ENCODE measurements at regions of chr19 and their contacts with region 1.

Region 1: GRCh38 chr19:55339048-55339888 is at the start of gene KMT5C:
- DNase-seq: peak; percentile 100
- ATAC-seq: peak; percentile 93
- H3K4me3 ChIP-seq: peak within 1 kb of the TSS; percentile 85
- H3K27ac ChIP-seq: peak within 1 kb of the TSS; percentile 84
- H3K4me1 ChIP-seq: peaks cover 10% of the 10 kb centered on the region
- H3K27me3 ChIP-seq: no peaks in the 10 kb centered on the region; a peak in 1 of 4 replicates
- CTCF ChIP-seq: peak; percentile 11 to 19 (median 14); a peak in 3 of 6 replicates
- EP300 ChIP-seq: no peak
- POLR2A ChIP-seq: 0 out of 2 replicates have a peak, but pooled peaks have one; percentile 13
- RAD21 ChIP-seq: no peak
- polyA plus RNA-seq, gene KMT5C: 0.20 TPM in 1 of 2 experiments, not detected in the other

Region 2: GRCh38 chr19:55279770-55280643 is 59.3 kb before region 1 on chr19 and contains the start of gene HSPBP1:
- CTCF ChIA-PET with region 1: interaction called, 5 read pairs
- POLR2A ChIA-PET with region 1: interaction called, 18 read pairs
- RAD21 ChIA-PET with region 1: interaction called, 8 read pairs
- SMC1A ChIA-PET with region 1: interaction called, 4 read pairs
- in situ Hi-C with region 1: no loop called
- intact Hi-C with region 1: no loop called
- DNase-seq: peak; percentile 93
- ATAC-seq: peak; percentile 91
- H3K4me3 ChIP-seq: peak within 1 kb of the TSS; percentile 82
- H3K27ac ChIP-seq: peak within 1 kb of the TSS; percentile 50
- H3K4me1 ChIP-seq: peaks cover 42% of the 10 kb centered on the region
- H3K27me3 ChIP-seq: no peaks in the 10 kb centered on the region; a peak in 1 of 4 replicates
- CTCF ChIP-seq: no peak
- EP300 ChIP-seq: no peak
- POLR2A ChIP-seq: peak; percentile 84
- RAD21 ChIP-seq: no peak
- polyA plus RNA-seq, gene HSPBP1: 0.18 to 1.3 TPM

Region 3: GRCh38 chr19:55301459-55302317 is 37.6 kb before region 1 on chr19:
- CTCF ChIA-PET with region 1: interaction called, 32 read pairs
- POLR2A ChIA-PET with region 1: interaction called, 14 read pairs
- RAD21 ChIA-PET with region 1: interaction called, 17 read pairs
- SMC1A ChIA-PET with region 1: interaction called, 16 read pairs
- in situ Hi-C with region 1: no loop called
- intact Hi-C with region 1: no loop called
- DNase-seq: peak; percentile 59
- ATAC-seq: peak; percentile 93
- H3K4me3 ChIP-seq: peak overlapping the region; percentile 67; the same call in 1 of the 2 replicates
- H3K27ac ChIP-seq: peak overlapping the region; percentile 27
- H3K4me1 ChIP-seq: peaks cover 11% of the 10 kb centered on the region
- H3K27me3 ChIP-seq: no peaks in the 10 kb centered on the region
- CTCF ChIP-seq: peak; percentile 91 to 97 (median 95)
- EP300 ChIP-seq: no peak
- POLR2A ChIP-seq: peak; percentile 37; the same call in 1 of the 2 replicates
- RAD21 ChIP-seq: peak; percentile 49

Region 4: DNA sequence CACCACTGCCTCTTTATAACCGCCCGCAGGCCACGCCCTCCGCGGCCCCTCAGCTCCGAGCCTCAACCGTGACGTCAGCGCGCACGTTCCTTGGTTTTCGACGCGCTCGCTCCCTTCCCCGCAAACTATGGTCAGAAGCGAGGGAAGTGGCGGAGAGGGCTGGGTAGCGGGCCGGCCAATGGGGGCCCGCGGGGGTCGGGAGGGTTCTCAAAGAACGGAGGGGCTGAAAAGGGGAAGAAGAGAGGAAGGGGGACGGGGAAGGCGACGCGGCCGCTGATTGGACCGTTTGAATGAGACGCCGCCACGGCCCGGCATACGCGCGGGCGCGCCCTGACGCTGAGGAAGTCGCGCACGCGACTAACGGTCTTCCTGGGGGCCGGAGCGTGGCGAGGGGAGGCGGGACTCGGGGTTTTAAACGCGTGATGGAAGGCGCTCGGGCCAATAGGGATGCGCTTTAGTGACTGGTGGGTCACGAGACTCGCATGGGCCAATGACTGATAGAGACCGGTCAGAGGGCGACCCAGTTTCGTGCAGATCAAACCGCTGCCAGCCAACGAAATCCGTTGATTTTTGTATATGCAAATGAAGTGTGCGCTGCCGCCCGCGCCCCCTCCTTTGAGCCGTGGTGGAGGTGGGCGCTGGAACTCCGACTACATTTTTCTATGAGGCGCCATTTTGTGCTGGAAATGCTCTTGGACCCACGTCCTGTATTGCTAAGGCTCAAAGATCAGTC is 68.7 kb after region 1 on chr19:
- CTCF ChIA-PET with region 1: no interaction called
- POLR2A ChIA-PET with region 1: interaction called, 14 read pairs
- RAD21 ChIA-PET with region 1: no interaction called
- SMC1A ChIA-PET with region 1: interaction called, 5 read pairs
- in situ Hi-C with region 1: no loop called
- intact Hi-C with region 1: no loop called
- DNase-seq: peak; percentile 97
- ATAC-seq: peak; percentile 96
- H3K4me3 ChIP-seq: peak overlapping the region; percentile 93
- H3K27ac ChIP-seq: peak overlapping the region; percentile 98
- H3K4me1 ChIP-seq: peaks cover 20% of the 10 kb centered on the region
- H3K27me3 ChIP-seq: no peaks in the 10 kb centered on the region
- CTCF ChIP-seq: no peak
- EP300 ChIP-seq: 0 out of 4 replicates have a peak, but pooled peaks of 1 of the 2 experiments have one; percentile 39
- POLR2A ChIP-seq: peak; percentile 39; the same call in 1 of the 2 replicates
- RAD21 ChIP-seq: no peak

Region 5: GRCh38 chr19:55426042-55426441 is 86.8 kb after region 1 on chr19:
- CTCF ChIA-PET with region 1: no interaction called
- POLR2A ChIA-PET with region 1: no interaction called
- RAD21 ChIA-PET with region 1: no interaction called
- SMC1A ChIA-PET with region 1: no interaction called
- in situ Hi-C with region 1: no loop called
- intact Hi-C with region 1: no loop called
- DNase-seq: no peak
- ATAC-seq: no peak
- H3K4me3 ChIP-seq: no peak overlapping the region
- H3K27ac ChIP-seq: no peak overlapping the region
- H3K4me1 ChIP-seq: no peaks in the 10 kb centered on the region
- H3K27me3 ChIP-seq: no peaks in the 10 kb centered on the region
- CTCF ChIP-seq: no peak
- EP300 ChIP-seq: no peak
- POLR2A ChIP-seq: no peak
- RAD21 ChIP-seq: no peak